PC-3 (cell line): ENCODE measurements at regions of chr17 and their contacts with region 1.

Region 1: GRCh38 chr17:81142301-81143199 is 22.8 kb upstream of the PVALEF start:
- DNase-seq: peak; percentile 83
- ATAC-seq: peak; percentile 100
- H3K4me3 ChIP-seq: no peak overlapping the region
- H3K27ac ChIP-seq: no peak overlapping the region
- H3K4me1 ChIP-seq: no peaks in the 10 kb centered on the region
- H3K27me3 ChIP-seq: no peaks in the 10 kb centered on the region
- CTCF ChIP-seq: peak; percentile 79

Region 2: DNA sequence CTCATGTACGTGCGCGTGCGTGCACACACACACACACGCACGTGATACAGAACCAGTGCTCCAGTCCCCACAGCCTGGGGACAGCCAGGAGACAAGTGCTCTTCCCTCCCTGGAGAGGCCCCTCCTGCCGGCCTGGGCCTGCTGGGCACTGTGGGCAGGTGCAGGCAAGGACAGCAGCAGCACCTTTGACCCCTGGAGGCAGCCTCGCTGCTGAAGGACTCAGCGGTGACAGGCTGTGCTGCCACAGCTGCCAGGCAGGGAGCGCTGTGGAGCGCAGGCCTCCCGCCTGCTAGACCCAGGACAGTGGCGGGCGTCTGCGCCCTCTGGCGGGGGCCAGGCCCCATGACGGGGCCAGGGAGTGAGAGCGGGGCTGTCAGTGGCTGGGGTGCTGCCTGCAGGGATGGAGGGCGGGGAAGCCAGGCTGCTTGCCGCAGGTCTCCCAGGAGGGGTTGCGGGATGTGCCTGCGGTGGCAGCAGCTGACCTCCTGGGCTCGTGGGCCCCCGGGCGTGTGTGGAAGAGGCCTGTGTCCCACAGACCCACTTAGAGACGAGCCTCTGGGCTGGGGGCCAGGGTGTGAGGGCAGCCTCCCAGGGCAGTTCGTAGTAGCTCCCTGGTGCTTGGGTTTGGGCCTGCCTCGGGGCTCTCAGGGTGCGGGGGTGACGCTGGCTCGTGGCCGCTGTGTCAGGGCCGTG is 40.8 kb before region 1 on chr17:
- CTCF ChIA-PET with region 1: no interaction called
- POLR2A ChIA-PET with region 1: no interaction called
- intact Hi-C with region 1: no loop called
- DNase-seq: peak; percentile 89
- ATAC-seq: peak; percentile 65
- H3K4me3 ChIP-seq: no peak overlapping the region
- H3K27ac ChIP-seq: no peak overlapping the region
- H3K4me1 ChIP-seq: peaks cover 19% of the 10 kb centered on the region
- H3K27me3 ChIP-seq: no peaks in the 10 kb centered on the region
- CTCF ChIP-seq: peak; percentile 99

Region 3: GRCh38 chr17:81165246-81166032 is 22.9 kb after region 1 on chr17 and contains the start of gene PVALEF:
- CTCF ChIA-PET with region 1: no interaction called
- POLR2A ChIA-PET with region 1: no interaction called
- intact Hi-C with region 1: no loop called
- DNase-seq: no peak
- ATAC-seq: peak; percentile 31
- H3K4me3 ChIP-seq: peak within 1 kb of the TSS; percentile 51; the same call in 1 of the 2 replicates
- H3K27ac ChIP-seq: no peak within 1 kb of the TSS
- H3K4me1 ChIP-seq: no peaks in the 10 kb centered on the region
- H3K27me3 ChIP-seq: peaks cover 15% of the 10 kb centered on the region
- CTCF ChIP-seq: no peak
- total RNA-seq, gene PVALEF: not detected in 2 replicates

Region 4: DNA sequence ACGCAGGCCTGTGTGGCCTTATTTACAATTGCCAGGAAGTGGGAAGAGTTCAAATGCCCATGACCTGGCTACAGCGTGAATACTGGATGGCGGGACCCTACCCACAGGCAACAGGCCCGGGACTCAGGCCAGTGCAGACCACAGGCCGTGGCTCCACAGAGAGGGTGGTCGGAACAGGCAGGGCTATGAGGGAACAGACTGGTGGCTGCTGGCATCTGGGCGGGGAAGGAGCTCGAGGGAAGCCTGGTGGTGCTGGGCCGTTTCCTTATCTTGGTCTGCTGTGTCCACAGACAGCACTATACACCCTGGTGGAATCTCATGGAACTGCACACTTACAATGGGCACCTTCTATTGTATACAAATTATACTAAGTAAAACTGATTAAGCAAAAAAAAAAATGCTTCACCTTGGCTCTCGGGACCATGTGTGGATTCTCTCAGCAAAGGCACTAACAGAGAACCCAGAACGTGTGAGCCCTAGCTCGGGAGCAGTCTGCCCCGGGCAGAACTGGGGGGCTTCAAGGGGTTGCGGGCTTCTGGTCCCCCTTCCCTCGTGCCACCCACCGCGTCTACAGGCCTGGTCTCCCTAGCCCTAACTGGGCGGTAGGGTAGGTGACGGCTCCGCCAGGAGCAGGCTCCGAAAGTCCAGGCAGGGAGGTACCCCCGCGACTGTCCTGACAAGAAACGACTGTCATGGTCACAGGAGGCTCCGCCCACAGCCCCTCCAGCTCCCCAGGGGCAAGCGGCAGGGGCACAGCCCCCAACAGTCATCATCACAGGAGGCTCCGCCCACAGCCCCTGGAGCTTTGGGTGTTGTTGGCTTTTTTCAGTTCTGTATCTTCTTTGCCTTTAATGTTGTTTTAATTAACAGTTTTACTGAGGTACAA is 58.4 kb after region 1 on chr17:
- CTCF ChIA-PET with region 1: interaction called, 3 read pairs
- POLR2A ChIA-PET with region 1: no interaction called
- intact Hi-C with region 1: loop called (anchors 2 kb)
- DNase-seq: peak; percentile 79
- ATAC-seq: peak; percentile 96
- H3K4me3 ChIP-seq: no peak overlapping the region
- H3K27ac ChIP-seq: no peak overlapping the region
- H3K4me1 ChIP-seq: no peaks in the 10 kb centered on the region
- H3K27me3 ChIP-seq: no peaks in the 10 kb centered on the region
- CTCF ChIP-seq: peak; percentile 62

Region 5: DNA sequence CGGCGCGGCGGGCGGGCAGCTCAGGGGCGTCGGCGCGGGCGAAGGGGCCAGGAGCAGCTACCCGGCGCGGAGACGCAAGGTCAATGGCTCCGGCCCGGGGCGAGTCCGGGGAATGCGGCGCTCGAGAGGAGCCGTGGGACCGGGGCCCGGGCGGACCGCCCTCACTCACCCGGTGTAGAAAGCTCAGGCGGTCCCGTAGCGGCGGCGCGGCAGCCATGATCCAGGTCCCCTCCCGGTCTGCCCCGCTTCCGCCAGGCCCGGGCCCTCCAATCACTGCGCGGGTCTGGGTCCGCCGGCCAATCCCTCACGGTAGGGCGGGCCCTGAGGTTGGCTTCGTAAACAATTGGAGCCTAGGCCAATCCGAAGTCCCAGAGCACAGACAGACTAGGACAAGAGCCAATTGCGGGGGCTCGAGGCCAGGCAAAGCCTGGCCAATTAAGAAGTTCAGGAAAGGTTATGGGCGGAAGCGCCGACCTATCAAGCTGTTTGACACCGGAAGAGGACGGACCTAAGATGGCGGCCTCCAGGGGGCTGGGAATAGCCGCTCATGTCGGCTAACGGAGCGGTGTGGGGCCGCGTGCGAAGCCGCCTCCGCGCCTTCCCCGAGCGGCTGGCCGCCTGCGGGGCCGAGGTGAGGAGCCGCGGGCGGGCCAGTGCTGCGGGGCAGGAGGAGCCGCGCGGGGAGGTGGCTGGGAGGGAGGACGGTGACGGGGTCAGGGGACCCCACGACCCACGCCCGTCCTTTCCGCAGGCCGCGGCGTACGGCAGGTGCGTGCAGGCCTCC is 96.5 kb after region 1 on chr17 and contains the starts of genes NDUFAF8 and TEPSIN:
- CTCF ChIA-PET with region 1: no interaction called
- POLR2A ChIA-PET with region 1: no interaction called
- intact Hi-C with region 1: loop called (anchors 1 kb)
- DNase-seq: peak; percentile 99
- ATAC-seq: peak; percentile 96
- H3K4me3 ChIP-seq: peak within 1 kb of the TSS; percentile 77
- H3K27ac ChIP-seq: peak within 1 kb of the TSS; percentile 19
- H3K4me1 ChIP-seq: peaks cover 18% of the 10 kb centered on the region; the same call in 1 of the 2 replicates
- H3K27me3 ChIP-seq: no peaks in the 10 kb centered on the region
- CTCF ChIP-seq: no peak
- total RNA-seq, gene NDUFAF8: 125 and 160 TPM in 2 replicates
- total RNA-seq, gene TEPSIN: 28.8 and 44.1 TPM in 2 replicates

Region 6: DNA sequence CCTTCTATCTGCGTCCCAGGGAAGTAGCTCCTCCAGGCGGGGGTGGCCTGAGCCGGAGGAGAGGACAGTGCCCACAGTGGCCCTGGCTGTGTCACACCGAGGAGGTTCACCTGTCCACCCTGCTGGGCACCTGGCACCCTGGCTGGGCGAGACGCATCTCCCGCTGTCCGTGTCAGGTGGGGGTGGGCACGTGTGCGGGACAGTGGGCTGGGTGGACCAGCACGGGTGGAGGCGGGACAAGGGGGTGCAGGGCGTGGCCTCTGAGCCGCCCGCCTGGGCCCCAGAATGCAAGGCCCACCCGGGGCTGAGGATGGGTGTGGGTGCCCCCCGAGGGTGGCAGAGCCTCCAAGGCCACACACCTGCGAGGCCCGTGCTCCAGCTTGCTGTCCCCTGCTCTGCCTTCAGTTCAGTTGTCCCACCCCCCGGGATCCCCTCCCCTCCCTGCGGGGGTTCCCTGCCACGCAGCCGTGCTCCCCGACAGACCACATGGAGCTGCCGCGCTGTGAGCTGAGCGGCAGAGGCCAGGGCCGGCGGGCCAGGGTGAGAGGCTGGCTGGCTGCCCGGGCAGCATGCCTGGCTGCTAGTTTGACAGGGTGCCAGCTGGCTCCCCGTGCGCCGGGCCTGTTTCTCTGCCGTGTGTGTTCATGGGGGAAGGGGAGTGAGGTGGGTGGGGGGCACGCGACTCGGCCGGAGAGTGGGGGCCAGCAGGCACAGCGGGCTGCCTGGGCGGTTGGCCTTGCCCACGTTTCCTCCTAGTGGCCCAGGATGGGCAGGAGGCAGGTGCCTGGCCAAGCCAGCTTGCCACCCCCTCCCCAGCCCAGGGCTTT is 286.6 kb after region 1 on chr17:
- CTCF ChIA-PET with region 1: interaction called, 11 read pairs
- POLR2A ChIA-PET with region 1: no interaction called
- intact Hi-C with region 1: no loop called
- DNase-seq: peak; percentile 81
- ATAC-seq: peak; percentile 69
- H3K4me3 ChIP-seq: no peak overlapping the region
- H3K27ac ChIP-seq: no peak overlapping the region
- H3K4me1 ChIP-seq: peaks cover 12% of the 10 kb centered on the region
- H3K27me3 ChIP-seq: no peaks in the 10 kb centered on the region
- CTCF ChIP-seq: no peak